Naive thymus-derived CD8-positive, alpha-beta T cell (primary cell): ENCODE measurements at regions of chr17 and their contacts with region 1.

Region 1: GRCh38 chr17:35312790-35313711 is 60.4 kb downstream of the SLFN11 start:
- DNase-seq: peak; percentile 65 to 97 (median 94)
- ATAC-seq: peak; percentile 87 to 91
- H3K4me3 Mint-ChIP-seq: peak overlapping the region; percentile 91 to 100 (median 96)
- H3K27ac Mint-ChIP-seq: peak overlapping the region; percentile 97 to 99 (median 98)
- H3K4me1 Mint-ChIP-seq: peaks cover 39 to 63% (median 54%) of the 10 kb centered on the region in 4 donors
- H3K27me3 Mint-ChIP-seq: no peaks in the 10 kb centered on the region

Region 2: DNA sequence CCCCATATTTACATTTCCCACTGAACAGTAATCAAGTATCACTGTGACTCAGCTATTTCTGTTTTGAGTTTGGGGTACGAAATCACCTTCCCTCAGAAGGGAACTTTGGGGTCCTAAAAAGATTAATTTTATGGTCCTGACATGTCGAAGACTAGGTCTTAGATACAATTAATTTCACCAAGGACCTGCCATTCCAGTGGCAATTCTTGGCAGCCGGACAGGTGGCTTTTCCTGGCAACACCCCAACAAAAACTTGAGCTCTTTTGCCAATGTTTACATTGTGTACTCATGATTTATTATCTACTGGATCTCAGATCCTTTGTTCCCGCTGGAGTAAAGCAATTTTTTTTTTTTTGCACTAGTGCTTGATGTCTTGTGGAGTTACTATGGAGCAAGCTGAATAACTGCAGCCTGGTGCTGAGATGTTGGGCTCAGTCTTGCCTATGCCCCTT is 55.8 kb before region 1 on chr17:
- POLR2A ChIA-PET with region 1: interaction called, 11 read pairs
- DNase-seq: no peak
- ATAC-seq: no peak
- H3K4me3 Mint-ChIP-seq: peak overlapping the region in 7 of 10 donors; percentile 4 to 62 (median 33)
- H3K27ac Mint-ChIP-seq: peak overlapping the region; percentile 64 to 91 (median 86)
- H3K4me1 Mint-ChIP-seq: peaks cover 39 to 85% (median 81%) of the 10 kb centered on the region in 4 donors
- H3K27me3 Mint-ChIP-seq: no peaks in the 10 kb centered on the region

Region 3: DNA sequence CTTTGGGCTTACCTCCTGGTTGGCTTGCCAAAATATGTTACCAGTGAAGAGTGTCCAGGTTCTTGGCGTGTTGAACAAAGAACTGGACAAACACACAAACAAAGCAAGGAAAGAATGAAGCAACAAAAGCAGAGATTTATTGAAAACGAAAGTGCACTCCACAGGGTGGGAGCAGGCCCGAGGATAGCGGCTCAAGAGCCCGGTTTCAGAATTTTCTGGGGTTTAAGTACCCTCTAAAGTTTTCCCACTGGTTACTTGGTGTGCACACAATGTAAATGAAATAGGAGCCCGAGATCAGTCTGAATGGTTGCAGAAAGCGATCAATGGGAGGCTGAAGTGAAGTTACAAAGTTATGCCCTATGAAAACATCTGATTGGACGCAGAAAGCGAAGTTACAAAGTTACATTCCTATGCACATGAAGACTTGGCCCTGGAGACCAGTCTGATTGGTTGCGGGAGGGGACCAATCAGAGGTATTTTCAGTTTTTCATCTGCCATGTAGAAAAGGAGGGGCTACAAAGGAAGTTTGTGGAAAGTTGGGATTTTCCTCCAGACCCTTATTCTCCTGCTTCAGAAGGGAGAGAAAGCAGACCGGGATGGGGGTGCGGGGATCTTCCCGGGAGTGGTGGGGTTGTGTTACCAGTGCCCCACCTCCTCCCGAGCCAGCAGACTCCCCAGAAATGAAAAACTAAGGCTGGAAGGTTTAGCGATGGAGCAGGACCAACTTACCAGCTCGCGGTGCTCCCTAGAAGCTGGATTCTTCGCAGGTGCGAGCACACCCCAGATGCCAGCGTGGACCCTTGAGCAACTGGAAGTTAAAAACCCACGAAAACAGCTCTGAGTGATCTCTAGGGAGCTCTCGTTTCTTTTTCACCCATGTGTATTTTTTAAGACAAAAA is 119.4 kb after region 1 on chr17 and contains the start of gene SLFN12:
- POLR2A ChIA-PET with region 1: interaction called, 17 read pairs
- DNase-seq: peak in 9 of 10 donors; percentile 39 to 81 (median 61)
- ATAC-seq: peak; percentile 89 to 92
- H3K4me3 Mint-ChIP-seq: peak within 1 kb of the TSS; percentile 89 to 100 (median 96)
- H3K27ac Mint-ChIP-seq: peak within 1 kb of the TSS; percentile 87 to 98 (median 95)
- H3K4me1 Mint-ChIP-seq: peaks cover 24 to 66% (median 63%) of the 10 kb centered on the region in 4 donors
- H3K27me3 Mint-ChIP-seq: no peaks in the 10 kb centered on the region
- polyA plus RNA-seq, gene SLFN12: 2.0 to 3.1 (median 2.1) TPM

Region 4: GRCh38 chr17:35519439-35519838 is 206.4 kb after region 1 on chr17:
- POLR2A ChIA-PET with region 1: interaction called, 23 read pairs
- DNase-seq: no peak
- ATAC-seq: no peak
- H3K4me3 Mint-ChIP-seq: peak overlapping the region in 9 of 10 donors; percentile 30 to 70 (median 66)
- H3K27ac Mint-ChIP-seq: peak overlapping the region in 9 of 10 donors; percentile 21 to 95 (median 78)
- H3K4me1 Mint-ChIP-seq: peaks cover 54 to 97% (median 90%) of the 10 kb centered on the region in 4 donors
- H3K27me3 Mint-ChIP-seq: peaks cover 0 to 2% (median 0%) of the 10 kb centered on the region in 5 donors

Region 5: DNA sequence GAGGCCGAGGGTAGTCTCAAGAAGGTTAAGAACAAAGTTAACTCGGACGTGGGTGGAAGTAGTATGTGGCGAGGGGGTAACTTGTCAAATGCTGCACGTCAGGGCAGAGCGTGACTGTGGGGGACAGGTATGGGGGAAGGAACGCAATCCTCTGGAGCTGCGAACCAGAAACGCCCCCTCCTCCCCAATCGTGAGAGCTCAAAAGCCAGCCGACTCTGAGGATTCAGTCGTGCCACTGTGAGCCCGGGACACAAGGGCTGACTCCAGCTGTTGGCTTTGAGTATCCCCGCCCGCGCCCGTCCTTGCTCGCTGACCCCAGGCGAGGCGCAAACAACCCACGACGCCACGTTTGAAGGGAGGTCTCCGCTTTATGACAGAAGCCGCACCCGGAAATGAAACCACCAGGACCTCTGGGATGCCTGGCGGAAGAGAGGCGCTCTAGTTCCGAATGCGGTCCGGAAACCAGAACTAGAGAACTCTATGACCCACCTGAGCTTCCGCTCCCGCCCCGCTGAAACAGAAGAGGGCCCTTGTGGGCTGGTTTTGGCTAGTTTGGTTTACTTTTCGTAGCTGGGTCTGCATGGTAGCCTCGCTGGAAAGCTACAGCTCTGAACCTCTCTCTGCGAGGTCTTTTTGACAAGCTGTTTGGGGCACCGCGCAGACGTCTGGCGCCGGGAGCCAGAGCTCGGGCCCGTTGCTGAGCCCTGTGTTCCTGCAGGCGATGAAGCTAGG is 265.3 kb after region 1 on chr17 and contains the start of gene PEX12:
- POLR2A ChIA-PET with region 1: interaction called, 30 read pairs
- DNase-seq: peak; percentile 66 to 95 (median 88)
- ATAC-seq: peak; percentile 96 to 97
- H3K4me3 Mint-ChIP-seq: peak within 1 kb of the TSS; percentile 93 to 100 (median 98)
- H3K27ac Mint-ChIP-seq: peak within 1 kb of the TSS; percentile 98 to 100 (median 99)
- H3K4me1 Mint-ChIP-seq: peaks cover 10 to 30% (median 26%) of the 10 kb centered on the region in 4 donors
- H3K27me3 Mint-ChIP-seq: peaks cover 0 to under 1% (median 0%) of the 10 kb centered on the region in 5 donors
- polyA plus RNA-seq, gene PEX12: 1.7 to 2.5 (median 1.9) TPM

Region 6: GRCh38 chr17:35676441-35676840 is 363.4 kb after region 1 on chr17:
- POLR2A ChIA-PET with region 1: no interaction called
- DNase-seq: no peak
- ATAC-seq: no peak
- H3K4me3 Mint-ChIP-seq: no peak overlapping the region
- H3K27ac Mint-ChIP-seq: peak overlapping the region in 1 of 10 donors; percentile 34
- H3K4me1 Mint-ChIP-seq: peaks cover 3 to 9% (median 6%) of the 10 kb centered on the region in 4 donors
- H3K27me3 Mint-ChIP-seq: no peaks in the 10 kb centered on the region